T-cell (primary cell): ENCODE measurements at regions of chr6 and their contacts with region 1.

Region 1: GRCh38 chr6:133923938-133924593 is 29.0 kb upstream of the TBPL1 start:
- DNase-seq: peak in 33 of 35 experiments; percentile 8 to 82 (median 42)
- ATAC-seq: peak; percentile 80 to 89 (median 86)
- H3K4me3 ChIP-seq: no peak overlapping the region
- H3K4me3 Mint-ChIP-seq: no peak overlapping the region
- H3K27ac ChIP-seq: no peak overlapping the region
- H3K27ac Mint-ChIP-seq: no peak overlapping the region
- H3K4me1 ChIP-seq: no peaks in the 10 kb centered on the region
- H3K4me1 Mint-ChIP-seq: no peaks in the 10 kb centered on the region
- H3K27me3 ChIP-seq: peaks cover 6 to 19% of the 10 kb centered on the region in 2 experiments
- H3K27me3 Mint-ChIP-seq: peaks cover 20 to 40% of the 10 kb centered on the region in 2 donors

Region 2: DNA sequence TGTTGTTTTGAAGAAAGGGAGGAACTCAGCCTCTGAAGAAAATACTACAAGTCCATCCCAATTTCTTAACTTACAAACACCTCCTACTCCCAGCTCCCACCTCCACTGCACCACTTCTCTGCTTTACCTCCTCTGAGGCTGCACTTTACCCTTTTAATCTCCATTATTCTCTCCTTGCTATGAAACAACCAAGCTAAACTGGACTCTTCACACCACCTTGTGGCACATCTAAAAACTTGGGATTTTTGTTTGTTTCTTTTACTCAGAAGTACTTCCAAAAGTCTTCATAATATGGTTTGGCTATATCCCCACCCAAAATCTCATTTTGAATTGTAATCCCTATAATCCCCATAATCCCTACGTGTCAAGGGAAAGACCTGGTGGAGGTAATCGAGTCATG is 1665.0 kb before region 1 on chr6:
- CTCF ChIA-PET with region 1: no interaction called
- POLR2A ChIA-PET with region 1: no interaction called
- DNase-seq: no peak
- ATAC-seq: no peak
- H3K4me3 ChIP-seq: no peak overlapping the region
- H3K4me3 Mint-ChIP-seq: no peak overlapping the region
- H3K27ac ChIP-seq: no peak overlapping the region
- H3K27ac Mint-ChIP-seq: no peak overlapping the region
- H3K4me1 ChIP-seq: no peaks in the 10 kb centered on the region
- H3K4me1 Mint-ChIP-seq: no peaks in the 10 kb centered on the region
- H3K27me3 ChIP-seq: no peaks in the 10 kb centered on the region
- H3K27me3 Mint-ChIP-seq: peaks cover 17 to 33% of the 10 kb centered on the region in 2 donors

Region 3: DNA sequence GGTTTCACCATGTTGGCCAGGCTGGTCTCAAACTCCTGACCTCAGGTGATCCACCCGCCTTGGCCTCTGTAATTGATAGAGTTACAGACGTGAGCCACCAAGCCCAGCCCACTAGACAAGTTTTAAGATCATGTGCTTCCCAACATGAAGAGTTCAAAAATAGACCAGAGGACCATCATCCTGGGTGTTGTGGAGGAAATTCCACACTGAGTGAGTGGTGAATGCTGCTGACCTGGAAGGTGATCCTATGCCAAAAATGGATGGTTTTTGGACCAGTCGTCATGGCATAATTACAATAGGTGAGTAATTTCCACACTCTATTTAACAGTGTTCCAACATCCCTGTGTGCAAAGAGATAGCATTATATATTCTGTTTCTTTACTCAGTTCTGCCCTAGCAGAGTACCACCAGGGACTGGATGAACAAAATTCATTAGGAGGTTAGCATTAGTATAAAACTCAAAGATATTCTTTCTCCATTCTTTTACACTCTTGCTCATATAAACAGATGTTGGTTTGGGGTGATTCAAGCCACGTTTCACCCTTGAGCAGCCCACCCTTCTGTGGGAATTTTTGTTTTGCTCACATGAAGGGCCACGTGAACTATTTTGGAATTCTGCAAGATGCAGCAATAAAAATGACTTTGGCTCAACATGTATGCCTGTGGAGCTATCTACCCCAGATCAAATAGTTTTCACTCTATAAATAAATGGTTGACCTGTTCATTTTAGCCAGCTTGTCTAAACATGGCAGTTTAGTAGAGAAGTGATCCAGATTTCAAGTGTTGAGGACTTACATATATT is 241.4 kb before region 1 on chr6:
- CTCF ChIA-PET with region 1: no interaction called
- POLR2A ChIA-PET with region 1: no interaction called
- DNase-seq: no peak
- ATAC-seq: no peak
- H3K4me3 ChIP-seq: no peak overlapping the region
- H3K4me3 Mint-ChIP-seq: no peak overlapping the region
- H3K27ac ChIP-seq: no peak overlapping the region
- H3K27ac Mint-ChIP-seq: no peak overlapping the region
- H3K4me1 ChIP-seq: no peaks in the 10 kb centered on the region
- H3K4me1 Mint-ChIP-seq: no peaks in the 10 kb centered on the region
- H3K27me3 ChIP-seq: no peaks in the 10 kb centered on the region
- H3K27me3 Mint-ChIP-seq: peaks cover 3 to 4% of the 10 kb centered on the region in 2 donors

Region 4: GRCh38 chr6:133952815-133953633 is 29.0 kb after region 1 on chr6 and contains the start of gene TBPL1:
- CTCF ChIA-PET with region 1: interaction called, 3 to 14 read pairs
- POLR2A ChIA-PET with region 1: no interaction called
- DNase-seq: peak; percentile 77 to 94 (median 86)
- ATAC-seq: peak; percentile 90 to 94 (median 92)
- H3K4me3 ChIP-seq: peak within 1 kb of the TSS; percentile 79 to 86
- H3K4me3 Mint-ChIP-seq: peak within 1 kb of the TSS; percentile 86 to 98 (median 95)
- H3K27ac ChIP-seq: peak within 1 kb of the TSS; percentile 86
- H3K27ac Mint-ChIP-seq: peak within 1 kb of the TSS; percentile 89 to 92
- H3K4me1 ChIP-seq: peaks cover 17 to 21% of the 10 kb centered on the region in 2 experiments
- H3K4me1 Mint-ChIP-seq: peaks cover 45 to 50% (median 47%) of the 10 kb centered on the region in 3 donors
- H3K27me3 ChIP-seq: no peaks in the 10 kb centered on the region
- H3K27me3 Mint-ChIP-seq: no peaks in the 10 kb centered on the region
- total RNA-seq, gene TBPL1: 27.7 to 30.5 (median 28.9) TPM

Region 5: DNA sequence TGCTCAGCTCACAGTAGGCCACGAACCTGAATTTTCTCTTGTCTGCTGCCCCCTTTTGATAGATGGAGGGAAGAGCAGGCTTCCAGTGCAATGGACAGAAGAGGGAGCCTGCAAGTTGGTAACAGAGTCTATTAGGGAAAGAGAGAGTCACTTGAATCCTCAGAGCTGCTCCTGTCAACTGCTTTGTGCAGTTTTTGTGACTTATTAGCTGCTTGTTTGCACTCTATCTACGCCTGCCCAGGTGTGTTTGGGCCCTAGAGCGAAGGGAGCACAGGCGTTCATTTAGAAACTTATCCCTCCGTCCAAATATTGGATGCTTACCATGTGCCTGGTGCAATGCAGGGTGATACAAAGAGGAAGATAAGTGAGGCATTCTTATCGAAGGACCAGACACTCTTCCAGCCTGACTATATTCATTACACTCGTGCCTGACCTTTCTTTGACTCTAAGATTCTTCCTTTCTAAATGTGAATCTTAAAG is 139.9 kb after region 1 on chr6:
- CTCF ChIA-PET with region 1: interaction called, 56 to 85 read pairs
- POLR2A ChIA-PET with region 1: no interaction called
- DNase-seq: peak in 34 of 35 experiments; percentile 10 to 74 (median 42)
- ATAC-seq: peak; percentile 88 to 90 (median 90)
- H3K4me3 ChIP-seq: no peak overlapping the region
- H3K4me3 Mint-ChIP-seq: no peak overlapping the region
- H3K27ac ChIP-seq: no peak overlapping the region
- H3K27ac Mint-ChIP-seq: no peak overlapping the region
- H3K4me1 ChIP-seq: no peaks in the 10 kb centered on the region
- H3K4me1 Mint-ChIP-seq: peaks cover 0 to 1% (median 0%) of the 10 kb centered on the region in 3 donors
- H3K27me3 ChIP-seq: no peaks in the 10 kb centered on the region
- H3K27me3 Mint-ChIP-seq: peaks cover 0 to 10% of the 10 kb centered on the region in 2 donors

Region 6: DNA sequence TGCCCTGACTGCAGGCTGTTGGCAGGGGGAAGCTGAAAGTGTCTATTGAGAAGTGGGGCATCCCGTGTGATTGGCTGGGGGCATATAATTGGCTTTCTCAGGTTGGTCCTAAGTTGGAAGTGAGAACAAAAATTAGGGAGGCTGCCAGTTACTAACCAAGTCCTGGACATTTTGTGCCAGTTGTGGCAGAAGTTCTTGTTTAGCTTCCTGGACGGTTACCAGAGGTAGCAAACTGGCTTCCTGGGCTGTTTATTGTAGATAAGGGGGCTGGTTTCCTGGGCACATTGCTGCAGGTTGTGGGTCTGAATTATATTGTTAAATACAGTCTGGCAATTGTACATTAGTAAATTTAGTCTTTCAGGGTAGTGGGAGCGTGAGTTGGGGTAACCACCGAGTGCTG is 178.9 kb after region 1 on chr6:
- CTCF ChIA-PET with region 1: interaction called, 85 to 201 read pairs
- POLR2A ChIA-PET with region 1: no interaction called
- DNase-seq: no peak
- ATAC-seq: no peak
- H3K4me3 ChIP-seq: no peak overlapping the region
- H3K4me3 Mint-ChIP-seq: no peak overlapping the region
- H3K27ac ChIP-seq: no peak overlapping the region
- H3K27ac Mint-ChIP-seq: no peak overlapping the region
- H3K4me1 ChIP-seq: no peaks in the 10 kb centered on the region
- H3K4me1 Mint-ChIP-seq: no peaks in the 10 kb centered on the region
- H3K27me3 ChIP-seq: peaks cover 0 to 8% of the 10 kb centered on the region in 2 experiments
- H3K27me3 Mint-ChIP-seq: peaks cover 14 to 30% of the 10 kb centered on the region in 2 donors